Activated CD4-positive, alpha-beta memory T cell treated with anti-CD3 and anti-CD28 coated beads for 36 hours (primary cell): ENCODE measurements at regions of chr9 and their contacts with region 1.

Region 1: DNA sequence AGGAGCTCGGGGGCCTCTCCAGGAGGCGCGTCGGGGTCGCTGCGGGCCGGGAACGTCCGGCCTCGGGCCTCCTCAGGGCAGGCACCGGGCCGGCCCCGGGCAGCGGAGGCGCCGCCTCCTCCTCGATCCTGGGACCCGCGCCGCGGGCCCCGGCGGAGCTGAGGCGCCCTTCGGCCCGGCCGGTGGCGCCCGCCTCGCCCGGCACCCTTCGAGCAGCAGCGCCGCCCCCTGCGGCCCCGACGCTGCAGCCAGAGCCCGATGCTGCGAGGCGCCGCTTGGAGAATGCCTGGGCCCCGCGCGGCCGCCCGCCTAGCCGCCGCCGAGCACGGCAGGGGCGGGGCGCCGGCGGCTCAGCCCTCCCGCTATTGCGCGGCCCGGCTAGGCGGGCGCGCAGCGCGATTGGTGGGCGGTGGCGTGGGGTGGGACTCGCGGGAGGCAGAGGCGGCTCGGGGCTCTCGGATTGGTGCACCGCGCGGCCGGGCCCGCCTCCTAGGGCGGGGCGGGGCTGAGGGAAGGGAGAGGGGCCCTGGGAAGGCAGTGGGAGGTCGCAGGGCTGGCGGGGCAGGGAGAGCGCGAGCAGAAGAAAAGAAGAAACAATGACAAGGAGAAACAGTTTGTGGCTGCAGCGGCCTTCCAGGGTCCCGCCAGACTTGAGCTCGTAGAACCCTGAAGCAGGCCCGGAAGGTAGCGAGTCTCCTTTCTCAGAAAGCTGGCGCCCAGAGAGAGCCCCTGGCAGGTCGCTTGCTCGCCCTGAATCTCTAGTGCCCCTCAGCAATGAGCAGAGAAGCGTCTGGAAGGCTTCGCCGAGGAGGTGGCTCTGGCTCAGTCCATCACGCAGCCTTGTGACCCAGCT is at the start of gene EEIG1:
- DNase-seq: peak; percentile 98
- H3K4me3 Mint-ChIP-seq: peak within 1 kb of the TSS; percentile 96
- H3K27ac Mint-ChIP-seq: peak within 1 kb of the TSS; percentile 93
- H3K4me1 Mint-ChIP-seq: peaks cover 43% of the 10 kb centered on the region
- H3K27me3 Mint-ChIP-seq: no peaks in the 10 kb centered on the region
- total RNA-seq, gene EEIG1: 50.7 to 58.0 TPM

Region 2: GRCh38 chr9:127955294-127956035 is 25.5 kb before region 1 on chr9:
- CTCF ChIA-PET with region 1: interaction called, 29 read pairs
- POLR2A ChIA-PET with region 1: interaction called, 31 read pairs
- intact Hi-C with region 1: loop called (anchors 1 kb)
- DNase-seq: peak; percentile 95
- H3K4me3 Mint-ChIP-seq: peak overlapping the region; percentile 30
- H3K27ac Mint-ChIP-seq: peak overlapping the region; percentile 92
- H3K4me1 Mint-ChIP-seq: peaks cover 80% of the 10 kb centered on the region
- H3K27me3 Mint-ChIP-seq: no peaks in the 10 kb centered on the region

Region 3: GRCh38 chr9:128007566-128008138 is 26.7 kb after region 1 on chr9:
- CTCF ChIA-PET with region 1: interaction called, 3 read pairs
- POLR2A ChIA-PET with region 1: interaction called, 3 read pairs
- intact Hi-C with region 1: loop called (anchors 1 kb)
- DNase-seq: peak; percentile 94
- H3K4me3 Mint-ChIP-seq: peak overlapping the region; percentile 80
- H3K27ac Mint-ChIP-seq: peak overlapping the region; percentile 92
- H3K4me1 Mint-ChIP-seq: peaks cover 43% of the 10 kb centered on the region
- H3K27me3 Mint-ChIP-seq: no peaks in the 10 kb centered on the region